ENCODE measurements at regions of chr7 and their contacts with region 1.

Region 1: DNA sequence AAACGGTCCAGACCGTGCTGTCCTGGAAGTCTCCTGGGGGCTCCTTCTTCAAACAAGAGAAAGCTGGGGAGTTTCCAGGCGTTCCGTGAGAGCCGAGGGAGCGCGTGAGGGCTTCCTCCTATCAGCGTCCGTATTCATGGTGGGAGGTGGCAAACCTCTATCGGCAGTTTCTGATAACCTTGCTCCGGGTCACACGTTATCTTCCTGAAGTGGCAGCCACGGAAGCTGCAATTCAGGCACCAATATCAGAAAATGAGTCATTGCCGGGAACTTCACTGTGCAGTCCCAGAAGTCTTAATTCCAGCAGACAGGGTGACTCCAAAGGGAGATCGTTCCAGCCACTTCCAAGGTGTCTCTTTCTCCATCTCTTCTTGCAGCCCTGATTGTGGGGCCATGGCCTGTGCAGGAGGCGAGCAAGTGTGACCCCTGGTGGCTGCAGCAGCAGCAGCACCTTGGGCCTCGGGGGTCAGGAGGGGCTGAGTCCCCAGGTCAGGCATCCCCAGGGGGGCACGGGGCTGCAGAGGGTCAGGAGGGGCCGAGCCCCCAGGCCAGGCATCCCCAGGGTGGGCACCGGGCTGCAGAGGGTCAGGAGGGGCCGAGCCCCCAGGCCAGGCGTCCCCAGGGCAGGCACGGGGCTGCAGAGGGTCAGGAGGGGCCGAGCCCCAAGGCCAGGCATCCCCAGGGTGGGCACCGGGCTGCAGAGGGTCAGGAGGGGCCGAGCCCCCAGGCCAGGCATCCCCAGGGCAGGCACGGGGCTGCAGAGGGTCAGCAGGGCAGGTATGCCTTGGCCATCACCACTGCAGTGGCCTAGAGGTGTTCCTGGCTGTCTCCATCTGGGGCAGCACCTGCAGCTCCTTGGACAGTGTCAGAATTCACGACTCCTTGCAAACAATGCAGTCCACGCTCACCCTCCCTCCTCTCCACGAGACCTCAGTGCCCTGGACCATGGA is 538.7 kb downstream of the DNAJB6 start:
- DNase-seq: peak; percentile 38 to 43
- ATAC-seq: peak; percentile 78 to 95
- H3K4me3 ChIP-seq: no peak overlapping the region
- H3K27ac ChIP-seq: no peak overlapping the region
- H3K4me1 ChIP-seq: no peaks in the 10 kb centered on the region
- CTCF ChIP-seq: peak; percentile 53
- EP300 ChIP-seq: no peak
- POLR2A ChIP-seq: no peak
- RAD21 ChIP-seq: peak; percentile 65 to 76

Region 2: GRCh38 chr7:157432957-157433576 is 442.4 kb before region 1 on chr7:
- CTCF ChIA-PET with region 1: interaction called, 10 read pairs
- POLR2A ChIA-PET with region 1: no interaction called
- DNase-seq: peak; percentile 47 to 54
- ATAC-seq: peak; percentile 59 to 72; a peak in 5 of 6 replicates
- H3K4me3 ChIP-seq: peak overlapping the region; percentile 39
- H3K27ac ChIP-seq: peak overlapping the region; percentile 45 to 73; a peak in 5 of 6 replicates
- H3K4me1 ChIP-seq: peaks cover 6% of the 10 kb centered on the region; the same call in 1 of the 3 replicates
- CTCF ChIP-seq: peak; percentile 78
- EP300 ChIP-seq: no peak
- POLR2A ChIP-seq: no peak
- RAD21 ChIP-seq: peak; percentile 80 to 82

Region 3: DNA sequence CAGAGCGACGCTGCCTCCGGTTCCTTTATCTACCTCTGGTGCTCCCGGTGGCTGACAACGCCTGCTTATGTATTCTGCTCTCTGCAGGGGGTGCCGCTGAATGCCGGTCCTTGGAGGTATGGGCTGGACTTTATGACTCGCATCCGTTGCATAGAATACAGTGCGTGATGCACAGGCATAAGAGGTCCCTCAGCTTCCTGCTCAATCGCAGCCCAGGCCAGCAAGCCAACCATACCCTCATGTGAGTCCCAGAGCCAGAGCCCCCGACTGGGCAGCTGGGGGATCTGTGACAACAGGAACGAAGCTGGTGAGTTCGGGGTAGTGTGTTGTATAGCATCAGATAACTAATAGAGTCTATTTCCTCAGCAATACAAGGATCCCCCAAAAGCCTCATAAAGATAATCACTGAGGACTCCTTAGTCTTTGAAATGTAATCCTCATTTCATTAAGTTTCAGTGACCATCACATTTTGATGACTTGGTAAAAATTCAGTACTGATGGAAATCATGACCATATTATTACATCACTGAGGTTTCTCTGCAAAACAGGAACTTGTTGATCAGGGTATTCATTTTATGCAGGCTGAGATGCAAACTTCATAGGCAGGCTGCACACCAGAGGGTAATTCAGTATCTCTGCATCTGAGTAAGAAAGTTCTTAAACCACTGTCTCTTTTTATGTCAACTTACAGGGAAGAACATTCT is 104.3 kb after region 1 on chr7:
- CTCF ChIA-PET with region 1: no interaction called
- POLR2A ChIA-PET with region 1: no interaction called
- DNase-seq: no peak
- ATAC-seq: no peak
- H3K4me3 ChIP-seq: no peak overlapping the region
- H3K27ac ChIP-seq: no peak overlapping the region
- H3K4me1 ChIP-seq: no peaks in the 10 kb centered on the region
- CTCF ChIP-seq: no peak
- EP300 ChIP-seq: no peak
- POLR2A ChIP-seq: no peak
- RAD21 ChIP-seq: no peak

Region 4: GRCh38 chr7:158133515-158134271 is 258.2 kb after region 1 on chr7:
- CTCF ChIA-PET with region 1: no interaction called
- POLR2A ChIA-PET with region 1: no interaction called
- DNase-seq: no peak
- ATAC-seq: no peak; a peak in 1 of 6 replicates
- H3K4me3 ChIP-seq: no peak overlapping the region
- H3K27ac ChIP-seq: no peak overlapping the region
- H3K4me1 ChIP-seq: no peaks in the 10 kb centered on the region
- CTCF ChIP-seq: no peak
- EP300 ChIP-seq: no peak
- POLR2A ChIP-seq: no peak
- RAD21 ChIP-seq: no peak

Measured in A549 (cell line).